Panc1 (cell line): ENCODE measurements at regions of chr1 and their contacts with region 1.

Region 1: GRCh38 chr1:16618719-16619118 is 5.4 kb upstream of the NBPF1 start:
- DNase-seq: no peak
- ATAC-seq: no peak
- H3K4me3 ChIP-seq: no peak overlapping the region
- H3K27ac ChIP-seq: no peak overlapping the region
- H3K4me1 ChIP-seq: peaks cover 15% of the 10 kb centered on the region
- H3K27me3 ChIP-seq: no peaks in the 10 kb centered on the region
- CTCF ChIP-seq: no peak

Region 2: GRCh38 chr1:16938351-16939321 is 319.9 kb after region 1 on chr1:
- CTCF ChIA-PET with region 1: no interaction called
- POLR2A ChIA-PET with region 1: interaction called, 12 read pairs
- in situ Hi-C with region 1: no loop called
- intact Hi-C with region 1: no loop called
- DNase-seq: no peak
- ATAC-seq: no peak
- H3K4me3 ChIP-seq: no peak overlapping the region
- H3K27ac ChIP-seq: no peak overlapping the region
- H3K4me1 ChIP-seq: no peaks in the 10 kb centered on the region
- H3K27me3 ChIP-seq: no peaks in the 10 kb centered on the region
- CTCF ChIP-seq: no peak

Region 3: DNA sequence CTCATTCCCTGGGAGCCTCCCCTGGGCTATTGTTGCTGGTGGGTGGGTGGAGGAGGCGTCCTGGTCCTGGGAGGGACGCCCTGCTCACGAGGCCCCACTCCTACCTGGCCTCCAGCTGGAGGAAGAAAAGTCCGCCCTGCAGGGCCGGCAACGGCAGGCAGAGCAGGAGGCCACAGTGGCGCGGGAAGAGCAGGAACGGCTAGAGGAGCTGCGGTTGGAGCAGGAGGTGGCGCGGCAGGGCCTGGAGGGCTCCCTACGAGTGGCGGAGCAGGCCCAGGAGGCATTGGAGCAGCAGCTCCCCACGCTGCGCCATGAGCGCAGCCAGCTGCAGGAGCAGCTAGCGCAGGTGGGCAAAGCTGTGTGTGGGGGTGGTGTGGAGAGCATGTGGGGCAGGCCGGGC is 327.9 kb after region 1 on chr1:
- CTCF ChIA-PET with region 1: interaction called, 58 read pairs
- POLR2A ChIA-PET with region 1: interaction called, 3 read pairs
- in situ Hi-C with region 1: no loop called
- intact Hi-C with region 1: no loop called
- DNase-seq: no peak
- ATAC-seq: no peak
- H3K4me3 ChIP-seq: no peak overlapping the region
- H3K27ac ChIP-seq: no peak overlapping the region
- H3K4me1 ChIP-seq: no peaks in the 10 kb centered on the region; the same call in 1 of the 2 replicates
- H3K27me3 ChIP-seq: no peaks in the 10 kb centered on the region
- CTCF ChIP-seq: no peak

Region 4: DNA sequence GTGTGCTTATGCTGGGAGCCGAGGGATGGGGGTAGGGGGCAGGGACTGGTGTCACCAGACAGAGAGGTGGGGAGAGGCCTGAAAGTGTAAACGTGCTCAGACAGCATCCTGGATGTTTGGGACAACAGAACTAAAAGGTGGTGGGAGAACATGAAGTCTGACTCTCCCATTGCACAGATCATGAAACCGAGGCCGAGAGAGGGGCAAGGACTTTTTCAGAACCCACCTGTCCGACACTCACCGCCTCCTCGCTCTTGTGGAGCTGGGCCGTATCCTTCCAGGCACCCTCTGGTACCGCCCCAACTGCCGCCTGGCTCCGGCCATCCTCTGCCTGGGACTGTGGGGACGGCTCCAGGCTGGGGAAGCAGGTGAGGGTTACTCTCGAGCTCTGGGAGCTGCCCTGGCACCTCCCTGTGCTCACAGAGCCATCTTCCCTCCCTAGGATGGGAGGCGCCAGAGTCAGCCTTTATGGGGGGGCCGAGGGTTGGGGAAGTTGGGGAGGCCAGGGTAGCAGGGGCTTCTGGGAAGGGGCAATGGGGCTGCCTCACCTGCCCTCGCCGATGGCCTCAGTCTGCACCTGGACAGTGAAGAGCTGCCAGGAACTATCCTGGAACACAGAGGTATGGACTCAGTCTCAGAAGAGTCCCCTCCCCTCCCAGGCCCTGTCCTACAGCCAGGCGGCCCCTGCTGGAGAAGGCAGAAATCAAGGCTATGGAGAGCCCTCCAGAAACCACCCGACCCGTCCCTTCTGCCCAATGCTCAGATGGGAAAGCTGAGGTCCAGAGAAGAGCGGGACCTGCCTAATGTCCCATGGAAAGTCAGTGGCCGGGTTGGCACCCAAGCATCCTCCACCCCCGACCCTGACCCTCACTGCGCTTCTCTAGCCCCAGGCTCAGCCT is 386.0 kb after region 1 on chr1:
- CTCF ChIA-PET with region 1: interaction called, 11 read pairs
- POLR2A ChIA-PET with region 1: no interaction called
- in situ Hi-C with region 1: no loop called
- intact Hi-C with region 1: no loop called
- DNase-seq: no peak
- ATAC-seq: peak; percentile 82
- H3K4me3 ChIP-seq: no peak overlapping the region
- H3K27ac ChIP-seq: no peak overlapping the region
- H3K4me1 ChIP-seq: peaks cover 2% of the 10 kb centered on the region; the same call in 1 of the 2 replicates
- H3K27me3 ChIP-seq: no peaks in the 10 kb centered on the region
- CTCF ChIP-seq: no peak; the same call in 1 of the 2 replicates